ENCODE measurements at regions of chr2 and their contacts with region 1.

Region 1: GRCh38 chr2:227460070-227460485 is 11.9 kb upstream of the AGFG1 start:
- DNase-seq: peak; percentile 29
- H3K4me3 Mint-ChIP-seq: peak overlapping the region; percentile 59
- H3K27ac Mint-ChIP-seq: peak overlapping the region; percentile 84
- H3K4me1 Mint-ChIP-seq: peaks cover 74% of the 10 kb centered on the region
- H3K27me3 Mint-ChIP-seq: no peaks in the 10 kb centered on the region

Region 2: DNA sequence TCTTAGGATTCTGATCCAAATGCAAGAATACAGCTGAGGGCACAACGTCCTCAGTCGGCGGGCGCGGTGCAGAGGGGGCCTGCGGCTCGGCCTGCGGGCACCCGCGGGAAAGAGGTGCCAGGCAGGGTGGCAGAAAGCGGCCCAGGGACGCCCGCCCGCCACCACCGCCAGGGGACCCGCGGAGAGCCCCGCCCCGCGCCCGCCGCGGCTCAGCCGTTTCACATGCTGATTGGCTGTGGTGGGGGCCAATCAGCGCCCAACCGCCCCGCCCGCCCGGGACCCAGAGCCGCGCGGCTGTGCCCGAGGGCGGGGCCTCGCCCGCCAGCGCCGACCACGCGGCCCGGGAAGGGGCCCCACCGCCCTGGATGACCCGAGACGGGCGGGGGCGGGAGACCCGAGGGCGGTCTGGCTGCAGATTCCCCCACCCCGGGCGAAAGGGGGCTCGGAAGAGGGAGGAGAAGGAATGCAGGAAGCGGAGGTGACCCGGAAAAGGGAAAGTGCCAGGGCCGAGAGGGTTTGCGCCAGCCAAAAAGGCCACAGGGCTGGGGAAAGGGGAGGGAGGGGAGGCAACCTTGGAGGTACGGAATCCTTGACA is 668.5 kb before region 1 on chr2:
- intact Hi-C with region 1: loop called (anchors 1 kb)
- DNase-seq: peak; percentile 89
- H3K4me3 Mint-ChIP-seq: peak overlapping the region; percentile 89
- H3K27ac Mint-ChIP-seq: peak overlapping the region; percentile 97
- H3K4me1 Mint-ChIP-seq: peaks cover 61% of the 10 kb centered on the region
- H3K27me3 Mint-ChIP-seq: no peaks in the 10 kb centered on the region

Region 3: GRCh38 chr2:227370791-227371312 is 89.2 kb before region 1 on chr2:
- intact Hi-C with region 1: loop called (anchors 1 kb)
- DNase-seq: no peak
- H3K4me3 Mint-ChIP-seq: no peak overlapping the region
- H3K27ac Mint-ChIP-seq: no peak overlapping the region
- H3K4me1 Mint-ChIP-seq: peaks cover 12% of the 10 kb centered on the region
- H3K27me3 Mint-ChIP-seq: peaks cover 2% of the 10 kb centered on the region

Region 4: DNA sequence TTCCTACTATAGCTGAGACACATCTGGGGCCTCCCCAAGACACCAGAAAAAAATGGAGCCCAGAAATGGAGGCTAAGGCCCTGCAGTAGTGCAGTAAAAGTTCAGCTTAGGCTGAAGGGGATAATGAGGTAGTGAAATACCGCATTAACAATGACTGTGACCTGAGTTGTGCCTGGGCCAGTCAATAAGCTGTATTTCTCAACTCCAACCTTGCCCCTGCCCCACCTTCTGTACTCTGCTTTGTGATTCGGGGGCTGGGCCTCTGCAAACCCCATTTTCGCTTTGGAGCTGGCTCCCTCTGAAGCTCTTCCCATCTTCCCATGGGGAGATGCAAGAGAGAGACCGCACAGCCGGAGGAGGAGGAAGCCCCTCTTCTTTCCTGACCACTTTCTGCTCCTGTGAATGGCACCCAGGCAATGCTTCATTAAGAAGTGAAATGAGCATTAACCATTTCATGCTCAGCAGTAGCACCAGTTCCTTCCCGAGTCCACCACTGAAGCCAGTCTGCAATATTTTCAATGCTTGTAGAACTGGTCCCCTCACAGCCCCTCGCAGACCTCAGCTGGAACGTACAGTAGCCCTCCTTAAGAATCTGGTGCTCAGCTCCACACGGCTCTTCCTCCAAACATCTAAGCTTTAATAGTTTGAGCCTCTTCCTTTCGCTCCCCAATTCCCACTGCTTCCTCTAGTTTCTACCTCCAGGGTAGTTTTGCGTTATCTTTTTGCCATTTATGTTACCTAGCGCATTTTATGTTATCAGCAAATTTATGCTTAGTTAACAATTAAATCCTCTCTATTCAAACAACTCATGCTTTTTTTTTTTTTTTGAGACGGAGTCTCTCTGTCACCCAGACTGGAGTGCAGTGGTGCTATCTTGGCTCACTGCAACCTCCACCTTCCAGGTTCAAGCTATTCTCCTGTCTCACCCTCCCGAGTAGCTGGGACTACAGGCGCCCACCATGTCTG is 39.7 kb before region 1 on chr2:
- intact Hi-C with region 1: no loop called
- DNase-seq: no peak
- H3K4me3 Mint-ChIP-seq: no peak overlapping the region
- H3K27ac Mint-ChIP-seq: no peak overlapping the region
- H3K4me1 Mint-ChIP-seq: peaks cover 24% of the 10 kb centered on the region
- H3K27me3 Mint-ChIP-seq: peaks cover 3% of the 10 kb centered on the region

Region 5: GRCh38 chr2:227471924-227472264 is 11.8 kb after region 1 on chr2 and contains the start of gene AGFG1:
- intact Hi-C with region 1: loop called (anchors 1 kb)
- DNase-seq: peak; percentile 78
- H3K4me3 Mint-ChIP-seq: peak within 1 kb of the TSS; percentile 88
- H3K27ac Mint-ChIP-seq: peak within 1 kb of the TSS; percentile 86
- H3K4me1 Mint-ChIP-seq: peaks cover 56% of the 10 kb centered on the region
- H3K27me3 Mint-ChIP-seq: no peaks in the 10 kb centered on the region
- total RNA-seq, gene AGFG1: 239 and 252 TPM in 2 replicates

Region 6: GRCh38 chr2:227817850-227818674 is 358.0 kb after region 1 on chr2:
- intact Hi-C with region 1: loop called (anchors 5 kb)
- DNase-seq: peak; percentile 21
- H3K4me3 Mint-ChIP-seq: no peak overlapping the region
- H3K27ac Mint-ChIP-seq: peak overlapping the region; percentile 77
- H3K4me1 Mint-ChIP-seq: peaks cover 21% of the 10 kb centered on the region
- H3K27me3 Mint-ChIP-seq: peaks cover 5% of the 10 kb centered on the region